Naive thymus-derived CD4-positive, alpha-beta T cell (primary cell): ENCODE measurements at regions of chr4 and their contacts with region 1.

Region 1: GRCh38 chr4:177351622-177352244 is 42.1 kb downstream of the NEIL3 start:
- DNase-seq: no peak
- ATAC-seq: no peak
- H3K4me3 ChIP-seq: no peak overlapping the region
- H3K4me3 Mint-ChIP-seq: no peak overlapping the region
- H3K27ac ChIP-seq: no peak overlapping the region
- H3K27ac Mint-ChIP-seq: no peak overlapping the region
- H3K4me1 ChIP-seq: no peaks in the 10 kb centered on the region
- H3K4me1 Mint-ChIP-seq: peaks cover 0 to 7% (median 0%) of the 10 kb centered on the region in 7 donors
- H3K27me3 ChIP-seq: no peaks in the 10 kb centered on the region
- H3K27me3 Mint-ChIP-seq: no peaks in the 10 kb centered on the region

Region 2: GRCh38 chr4:176259330-176260090 is 1092.2 kb before region 1 on chr4:
- CTCF ChIA-PET with region 1: no interaction called
- POLR2A ChIA-PET with region 1: no interaction called
- intact Hi-C with region 1: loop called in 1 of 2 experiments (anchors 5 kb)
- DNase-seq: no peak
- ATAC-seq: no peak
- H3K4me3 ChIP-seq: no peak overlapping the region
- H3K4me3 Mint-ChIP-seq: no peak overlapping the region
- H3K27ac ChIP-seq: no peak overlapping the region
- H3K27ac Mint-ChIP-seq: no peak overlapping the region
- H3K4me1 ChIP-seq: no peaks in the 10 kb centered on the region
- H3K4me1 Mint-ChIP-seq: no peaks in the 10 kb centered on the region
- H3K27me3 ChIP-seq: no peaks in the 10 kb centered on the region
- H3K27me3 Mint-ChIP-seq: peaks cover 2 to 20% (median 4%) of the 10 kb centered on the region in 5 donors

Region 3: DNA sequence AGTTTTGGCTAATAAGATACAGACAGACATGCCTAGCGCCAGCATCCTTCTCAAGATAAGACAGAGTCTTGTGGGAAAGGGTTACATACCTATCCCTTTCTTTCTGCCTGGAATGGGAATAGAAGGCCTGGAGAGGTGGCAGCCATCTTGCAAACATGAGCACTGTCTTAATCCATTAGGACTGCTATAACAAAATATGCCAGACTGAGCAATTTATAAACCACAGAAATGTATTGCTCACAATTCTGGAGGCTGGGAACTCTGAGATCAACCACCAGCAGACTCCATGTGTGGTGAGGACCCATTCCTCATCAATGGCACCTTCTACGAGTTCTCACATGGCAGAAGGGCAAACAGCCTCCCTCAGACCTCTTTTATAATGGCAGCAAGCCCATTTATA is 68.6 kb before region 1 on chr4:
- CTCF ChIA-PET with region 1: no interaction called
- POLR2A ChIA-PET with region 1: no interaction called
- intact Hi-C with region 1: no loop called
- DNase-seq: no peak
- ATAC-seq: no peak
- H3K4me3 ChIP-seq: no peak overlapping the region
- H3K4me3 Mint-ChIP-seq: no peak overlapping the region
- H3K27ac ChIP-seq: no peak overlapping the region
- H3K27ac Mint-ChIP-seq: no peak overlapping the region
- H3K4me1 ChIP-seq: no peaks in the 10 kb centered on the region
- H3K4me1 Mint-ChIP-seq: peaks cover 0 to 4% (median 0%) of the 10 kb centered on the region in 7 donors
- H3K27me3 ChIP-seq: no peaks in the 10 kb centered on the region
- H3K27me3 Mint-ChIP-seq: peaks cover 0 to 5% (median 0%) of the 10 kb centered on the region in 5 donors

Region 4: DNA sequence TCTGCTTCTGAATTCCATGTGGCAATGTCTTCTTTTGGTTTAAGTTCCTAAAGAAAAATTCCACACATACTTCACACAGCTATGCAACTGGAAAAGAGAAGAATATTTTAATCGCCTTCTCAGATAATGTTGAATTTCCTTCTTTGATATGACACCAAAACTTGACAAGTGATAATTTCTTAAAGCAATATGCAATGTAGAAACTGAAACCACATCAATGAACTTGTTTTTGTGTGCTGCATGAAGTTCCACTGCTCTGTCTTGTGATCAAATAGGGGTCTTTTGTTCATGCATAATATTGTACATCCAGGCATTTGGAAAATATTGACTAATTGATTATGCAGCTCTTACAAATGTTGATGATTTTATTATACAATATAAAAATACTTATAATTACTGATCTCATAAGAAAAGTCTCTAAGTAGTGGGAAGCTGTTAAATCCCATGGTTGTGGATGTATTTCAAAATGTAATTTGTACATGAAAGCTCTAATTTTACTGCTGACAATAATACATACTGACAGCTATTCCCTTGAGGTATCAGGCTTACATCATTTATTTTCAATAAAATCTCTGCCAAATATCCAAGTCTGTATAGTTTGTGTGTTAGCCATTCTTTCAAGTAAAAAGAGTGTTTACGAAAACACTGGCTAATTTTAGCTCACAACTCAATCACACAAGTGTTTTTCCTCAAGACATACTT is 34.0 kb after region 1 on chr4:
- CTCF ChIA-PET with region 1: no interaction called
- POLR2A ChIA-PET with region 1: no interaction called
- intact Hi-C with region 1: loop called in 1 of 2 experiments (anchors 5 kb)
- DNase-seq: no peak
- ATAC-seq: no peak
- H3K4me3 ChIP-seq: no peak overlapping the region
- H3K4me3 Mint-ChIP-seq: peak overlapping the region in 1 of 10 donors; percentile 38
- H3K27ac ChIP-seq: no peak overlapping the region
- H3K27ac Mint-ChIP-seq: no peak overlapping the region
- H3K4me1 ChIP-seq: no peaks in the 10 kb centered on the region
- H3K4me1 Mint-ChIP-seq: peaks cover 0 to 33% (median 6%) of the 10 kb centered on the region in 7 donors
- H3K27me3 ChIP-seq: no peaks in the 10 kb centered on the region
- H3K27me3 Mint-ChIP-seq: peaks cover 0 to 26% (median 6%) of the 10 kb centered on the region in 5 donors